ENCODE measurements at regions of chr19 and their contacts with region 1.

Region 1: GRCh38 chr19:8412783-8413628 is at the start of gene MARCHF2:
- DNase-seq: peak; percentile 99
- total RNA-seq, gene MARCHF2: 84.3 TPM

Region 2: DNA sequence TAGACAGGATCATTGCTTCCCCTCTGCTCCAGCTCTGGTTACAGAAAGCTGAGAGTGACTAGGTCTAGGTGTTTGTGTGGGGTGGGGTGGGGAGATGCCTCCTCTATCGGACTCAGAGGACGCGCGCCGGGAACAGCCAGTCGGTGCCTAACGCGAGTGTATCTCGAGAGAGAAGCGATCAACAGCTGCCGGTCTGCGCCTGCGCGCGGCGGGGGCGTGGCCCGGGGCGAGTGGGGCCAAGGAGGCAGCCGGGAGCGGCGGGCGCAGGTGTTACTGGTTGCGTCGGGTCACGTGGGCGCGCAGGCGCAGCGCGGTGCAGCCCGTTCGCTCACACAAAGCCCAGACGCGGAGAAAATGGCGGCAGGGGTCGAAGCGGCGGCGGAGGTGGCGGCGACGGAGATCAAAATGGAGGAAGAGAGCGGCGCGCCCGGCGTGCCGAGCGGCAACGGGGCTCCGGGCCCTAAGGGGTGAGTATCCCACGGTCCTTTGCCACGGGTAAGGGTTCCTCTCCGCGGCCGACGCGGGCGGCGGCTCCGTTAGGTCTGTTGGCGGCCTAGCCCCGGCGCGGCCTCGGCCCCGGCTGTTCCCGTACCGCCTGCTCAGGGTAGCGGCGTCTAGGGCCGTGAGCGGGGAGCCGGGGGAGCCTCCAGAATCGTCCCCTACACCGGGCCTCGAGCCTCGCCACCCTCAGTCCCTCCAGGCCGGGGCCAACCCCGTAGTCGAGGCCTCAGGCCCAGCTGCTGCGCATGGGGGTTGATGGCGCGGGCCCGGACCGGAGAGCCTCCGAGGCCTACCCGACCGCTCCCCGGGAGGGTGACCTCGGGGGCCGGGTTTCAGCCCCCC is 31.9 kb after region 1 on chr19 and contains the start of gene HNRNPM:
- intact Hi-C with region 1: loop called (anchors 5 kb)
- DNase-seq: peak; percentile 100
- total RNA-seq, gene HNRNPM: 102 TPM

Region 3: DNA sequence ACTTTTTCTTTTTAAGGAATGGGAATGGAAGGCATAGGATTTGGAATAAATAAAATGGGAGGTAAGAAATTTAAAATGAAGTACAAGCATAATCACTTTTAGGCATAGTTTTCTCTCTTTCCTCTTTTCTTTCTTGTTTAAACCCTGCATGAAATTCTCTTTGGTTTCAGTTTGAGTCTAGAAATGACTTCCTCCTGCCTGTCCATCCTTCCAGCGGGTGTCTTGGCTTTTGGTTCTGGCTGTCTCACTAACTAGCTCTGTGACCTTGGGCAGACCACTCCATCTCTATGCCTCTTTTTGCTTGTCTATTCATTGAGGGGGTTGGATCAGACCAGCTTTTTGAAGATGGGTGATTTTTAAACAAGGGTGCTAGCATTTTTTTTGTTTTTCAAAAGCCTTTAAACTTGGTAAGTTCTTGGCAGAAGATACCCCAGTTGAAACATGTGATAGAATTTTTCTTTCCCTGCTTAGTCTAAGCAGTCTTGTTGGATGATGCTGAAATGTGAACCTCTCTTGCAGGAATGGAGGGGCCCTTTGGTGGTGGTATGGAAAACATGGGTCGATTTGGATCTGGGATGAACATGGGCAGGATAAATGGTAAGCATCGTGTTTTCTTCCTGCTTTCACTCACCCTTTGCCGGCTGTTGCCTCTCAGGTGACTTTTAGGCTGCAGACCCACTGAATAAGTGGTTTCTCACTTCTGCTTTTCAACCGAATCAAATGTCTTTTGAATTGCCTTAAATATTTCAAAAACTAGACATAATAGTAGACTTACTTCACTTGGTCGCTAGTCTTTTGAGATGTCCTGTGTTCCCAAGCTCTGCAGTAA is 60.9 kb after region 1 on chr19:
- intact Hi-C with region 1: no loop called
- DNase-seq: no peak

Region 4: DNA sequence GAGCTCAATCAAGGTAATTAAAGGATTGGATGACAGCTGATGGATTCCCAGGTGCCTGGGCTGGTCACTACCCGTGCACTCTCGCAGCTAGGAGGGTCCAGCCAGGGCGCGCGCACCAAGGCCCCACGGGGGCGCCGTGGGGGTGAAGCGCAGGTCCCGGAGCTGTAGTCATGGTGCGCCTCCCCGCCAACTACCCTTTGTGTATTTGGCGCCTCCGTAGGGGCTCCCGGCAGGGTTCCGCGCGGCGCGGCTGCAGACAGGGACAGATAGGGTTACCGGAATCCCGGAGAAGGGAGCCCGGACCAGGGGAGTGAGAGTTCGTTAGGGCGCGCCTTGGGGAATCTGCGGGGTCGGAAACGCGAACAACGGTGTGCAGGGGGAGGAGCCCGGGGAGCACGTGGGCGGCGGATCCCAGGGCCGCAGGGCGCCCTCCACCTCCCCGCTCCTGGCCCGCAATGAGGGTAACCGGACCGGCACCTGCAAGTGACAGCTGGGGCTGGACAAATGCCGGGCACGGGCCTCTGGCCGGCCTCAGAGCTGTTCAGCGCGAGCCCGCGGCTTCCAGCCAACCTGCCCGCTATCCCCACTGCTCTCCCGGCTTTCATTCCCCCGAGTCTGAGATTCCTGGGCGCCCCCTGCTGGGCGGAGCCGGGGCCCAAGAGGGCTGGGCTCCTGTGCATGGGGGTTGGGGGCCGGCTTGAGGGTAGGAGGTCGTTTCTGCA is 92.8 kb after region 1 on chr19:
- intact Hi-C with region 1: loop called (anchors 5 kb)
- DNase-seq: peak; percentile 91

Measured in cardiac septum (tissue), 1 donor.